ENCODE measurements at regions of chrX and their contacts with region 1.

Region 1: DNA sequence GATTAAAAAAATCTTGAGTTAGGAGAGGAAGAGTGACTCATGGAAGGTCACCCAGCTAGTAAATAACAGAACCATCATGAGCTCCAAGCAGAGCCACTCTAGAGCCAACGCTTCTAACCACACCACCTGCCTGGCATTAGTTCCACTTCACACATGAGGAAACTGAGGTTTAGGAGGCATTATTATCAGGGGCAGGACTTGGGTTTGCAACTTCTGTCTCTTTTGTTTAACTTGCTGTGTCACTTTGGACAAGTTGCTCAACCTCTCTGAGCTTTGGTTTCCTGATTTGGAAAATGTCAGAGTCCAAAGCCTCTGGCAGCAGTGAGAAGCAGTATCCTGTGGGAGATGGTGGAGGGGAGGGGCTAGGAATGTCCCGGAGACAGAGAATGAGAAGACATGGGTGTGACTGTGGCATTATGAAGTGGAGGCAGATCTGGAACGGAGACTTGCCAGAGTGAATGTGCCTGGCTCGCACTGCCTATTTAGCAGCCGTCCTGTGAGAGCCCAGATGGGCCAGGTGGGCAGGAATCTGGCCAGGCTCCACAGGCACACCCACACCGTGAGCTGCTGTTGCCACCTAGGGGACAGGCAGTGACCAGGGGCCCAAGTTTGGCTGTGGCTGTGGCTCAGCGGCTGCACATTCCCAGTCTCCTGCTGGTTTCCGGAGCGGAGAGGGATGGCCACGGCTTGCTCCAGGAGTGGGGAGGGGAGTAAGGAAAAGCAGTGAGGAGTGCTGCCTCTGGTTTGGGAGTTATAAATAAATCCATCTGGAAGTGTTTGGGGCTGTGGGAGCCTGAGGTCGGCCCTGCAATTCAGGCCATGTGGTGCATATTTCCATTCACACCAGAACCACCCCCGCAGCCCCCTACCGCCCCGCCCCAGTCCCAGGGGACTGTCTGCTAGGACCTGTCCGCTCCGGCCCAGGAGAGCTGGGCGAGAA is 93.4 kb downstream of the NHSL2 start:
- DNase-seq: peak in 3 of 4 donors; percentile 31 to 60 (median 58)
- ATAC-seq: peak; percentile 42
- H3K4me3 ChIP-seq: no peak overlapping the region
- H3K27ac ChIP-seq: no peak overlapping the region
- H3K4me1 ChIP-seq: no peaks in the 10 kb centered on the region
- H3K27me3 ChIP-seq: no peaks in the 10 kb centered on the region
- CTCF ChIP-seq: peak in 3 of 7 experiments; percentile 17 to 29 (median 20)
- POLR2A ChIP-seq: no peak

Region 2: GRCh38 chrX:71532753-71533425 is 471.2 kb before region 1 on chrX and contains the start of gene OGT:
- intact Hi-C with region 1: no loop called
- DNase-seq: peak; percentile 95 to 97 (median 96)
- ATAC-seq: peak; percentile 96
- H3K4me3 ChIP-seq: peak within 1 kb of the TSS; percentile 52 to 77
- H3K27ac ChIP-seq: peak within 1 kb of the TSS; percentile 72 to 94 (median 90)
- H3K4me1 ChIP-seq: peaks cover 5% of the 10 kb centered on the region
- H3K27me3 ChIP-seq: no peaks in the 10 kb centered on the region
- CTCF ChIP-seq: no peak
- POLR2A ChIP-seq: peak; percentile 71 to 94 (median 90)
- total RNA-seq, gene OGT: 180 to 184 TPM

Region 3: DNA sequence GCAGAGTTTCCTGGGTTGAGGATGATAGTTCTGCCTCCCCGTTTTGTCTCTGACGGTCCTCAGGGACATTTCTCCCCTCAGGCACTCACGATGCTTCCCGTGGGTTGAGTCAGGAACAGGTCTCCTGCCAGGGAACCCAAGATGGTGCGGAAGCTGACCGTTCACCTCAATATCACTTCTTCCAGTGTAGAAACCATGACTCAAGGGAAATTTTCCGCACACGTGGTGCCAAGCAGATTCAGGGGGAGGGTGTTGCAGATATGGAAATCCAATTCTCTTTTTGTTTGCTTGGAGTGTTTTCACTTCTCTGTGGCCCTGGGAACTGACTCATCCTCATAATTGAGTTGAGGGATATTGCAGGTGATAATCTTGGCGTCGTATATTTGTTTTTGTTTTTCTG is 194.2 kb before region 1 on chrX:
- intact Hi-C with region 1: no loop called
- DNase-seq: no peak
- ATAC-seq: no peak
- H3K4me3 ChIP-seq: no peak overlapping the region
- H3K27ac ChIP-seq: no peak overlapping the region
- H3K4me1 ChIP-seq: no peaks in the 10 kb centered on the region
- H3K27me3 ChIP-seq: no peaks in the 10 kb centered on the region
- CTCF ChIP-seq: no peak
- POLR2A ChIP-seq: no peak

Region 4: GRCh38 chrX:71885099-71885498 is 119.0 kb before region 1 on chrX:
- intact Hi-C with region 1: no loop called
- DNase-seq: no peak
- ATAC-seq: no peak
- H3K4me3 ChIP-seq: no peak overlapping the region
- H3K27ac ChIP-seq: no peak overlapping the region
- H3K4me1 ChIP-seq: no peaks in the 10 kb centered on the region
- H3K27me3 ChIP-seq: no peaks in the 10 kb centered on the region
- CTCF ChIP-seq: no peak
- POLR2A ChIP-seq: no peak

Region 5: GRCh38 chrX:72121383-72121782 is 117.3 kb after region 1 on chrX:
- intact Hi-C with region 1: loop called (anchors 5 kb)
- DNase-seq: peak in 1 of 4 donors; percentile 50
- ATAC-seq: no peak
- H3K4me3 ChIP-seq: no peak overlapping the region
- H3K27ac ChIP-seq: peak overlapping the region in 1 of 4 donors; percentile 29
- H3K4me1 ChIP-seq: no peaks in the 10 kb centered on the region
- H3K27me3 ChIP-seq: no peaks in the 10 kb centered on the region
- CTCF ChIP-seq: no peak
- POLR2A ChIP-seq: no peak